ENCODE measurements at regions of chr22 and their contacts with region 1.

Region 1: GRCh38 chr22:31345331-31346254 is 553 bp downstream of the PATZ1 start:
- DNase-seq: peak; percentile 86 to 96 (median 95)
- ATAC-seq: peak; percentile 58 to 60
- H3K4me3 ChIP-seq: peak overlapping the region; percentile 82
- H3K27ac ChIP-seq: peak overlapping the region; percentile 85
- H3K4me1 ChIP-seq: peaks cover 5% of the 10 kb centered on the region
- H3K27me3 ChIP-seq: no peaks in the 10 kb centered on the region

Region 2: DNA sequence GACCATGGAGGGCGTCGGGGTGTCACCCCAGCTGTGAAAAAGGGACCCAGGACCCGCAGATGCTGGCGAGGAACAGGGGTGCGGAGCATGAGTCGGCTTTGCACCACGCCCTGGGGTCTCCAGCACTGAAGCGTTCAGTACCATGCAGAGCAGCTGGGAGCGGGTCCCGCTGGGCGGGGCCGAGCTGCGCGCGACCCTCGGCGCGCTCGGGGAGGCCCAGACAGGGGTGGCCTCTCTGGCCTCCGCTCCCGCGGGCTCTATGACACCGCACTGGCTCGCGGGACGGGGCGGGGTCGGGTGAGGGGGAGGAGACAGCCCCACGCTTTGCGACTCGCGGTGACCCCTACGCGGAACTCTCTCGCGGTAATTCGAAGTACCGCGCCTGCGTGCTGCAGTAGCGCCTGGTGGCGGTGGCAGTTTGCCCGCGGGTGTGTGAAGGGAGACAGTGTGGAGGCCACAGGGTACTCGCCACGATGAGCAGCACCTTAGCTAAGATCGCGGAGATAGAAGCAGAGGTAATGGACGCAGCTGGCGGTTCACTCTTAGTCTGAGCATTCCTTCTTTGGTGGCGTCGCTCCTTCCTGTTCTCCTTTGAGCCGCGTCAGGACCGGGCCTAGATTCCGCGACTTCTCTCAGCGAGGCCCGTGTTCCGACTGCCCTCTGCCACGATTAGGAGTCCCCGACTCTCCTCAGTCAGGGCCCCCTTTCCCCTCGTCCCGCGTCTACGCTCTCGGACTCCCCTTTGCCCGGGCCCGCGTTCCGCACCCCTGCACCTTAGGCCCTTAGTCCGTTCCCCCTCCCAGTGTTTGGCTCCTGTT is 53.8 kb after region 1 on chr22 and contains the start of gene DRG1:
- intact Hi-C with region 1: loop called in 3 of 4 experiments (anchors 1 to 5 kb)
- DNase-seq: peak; percentile 98 to 100 (median 99)
- ATAC-seq: peak; percentile 100
- H3K4me3 ChIP-seq: peak within 1 kb of the TSS; percentile 80
- H3K27ac ChIP-seq: peak within 1 kb of the TSS; percentile 76
- H3K4me1 ChIP-seq: no peaks in the 10 kb centered on the region
- H3K27me3 ChIP-seq: no peaks in the 10 kb centered on the region
- total RNA-seq, gene DRG1: 53.5 to 73.3 (median 62.5) TPM

Measured in right cardiac atrium (tissue), 5 donors.